ENCODE measurements at regions of chr2 and their contacts with region 1.

Region 1: GRCh38 chr2:57296795-57297517 is 749.6 kb upstream of the VRK2 start:
- DNase-seq: no peak
- H3K4me3 ChIP-seq: no peak overlapping the region
- H3K27me3 ChIP-seq: no peaks in the 10 kb centered on the region
- CTCF ChIP-seq: no peak

Region 2: DNA sequence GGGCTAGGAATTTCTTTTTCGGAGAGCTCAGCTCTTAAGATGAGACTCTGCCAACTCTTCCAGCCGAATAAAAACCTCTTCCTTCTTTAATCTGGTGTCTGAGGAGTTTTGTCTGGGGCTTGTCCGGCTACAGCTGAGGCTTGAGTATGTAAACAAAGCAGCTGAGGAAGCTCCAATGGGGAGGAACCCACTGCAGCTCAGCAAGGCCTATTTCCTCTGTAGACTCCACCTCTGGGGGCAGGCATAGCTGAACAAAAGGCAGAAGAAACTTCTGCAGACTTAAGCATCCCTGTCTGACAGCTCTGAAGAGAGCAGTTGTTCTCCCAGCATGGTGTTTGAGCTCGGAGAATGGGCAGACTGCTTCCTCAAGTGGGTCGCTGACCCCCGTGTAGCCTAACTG is 274.5 kb before region 1 on chr2:
- CTCF ChIA-PET with region 1: no interaction called
- POLR2A ChIA-PET with region 1: interaction called, 27 read pairs
- DNase-seq: no peak
- H3K4me3 ChIP-seq: no peak overlapping the region
- H3K27me3 ChIP-seq: no peaks in the 10 kb centered on the region
- CTCF ChIP-seq: no peak

Measured in BJ (cell line).